A673 (cell line): ENCODE measurements at regions of chr4 and their contacts with region 1.

Region 1: DNA sequence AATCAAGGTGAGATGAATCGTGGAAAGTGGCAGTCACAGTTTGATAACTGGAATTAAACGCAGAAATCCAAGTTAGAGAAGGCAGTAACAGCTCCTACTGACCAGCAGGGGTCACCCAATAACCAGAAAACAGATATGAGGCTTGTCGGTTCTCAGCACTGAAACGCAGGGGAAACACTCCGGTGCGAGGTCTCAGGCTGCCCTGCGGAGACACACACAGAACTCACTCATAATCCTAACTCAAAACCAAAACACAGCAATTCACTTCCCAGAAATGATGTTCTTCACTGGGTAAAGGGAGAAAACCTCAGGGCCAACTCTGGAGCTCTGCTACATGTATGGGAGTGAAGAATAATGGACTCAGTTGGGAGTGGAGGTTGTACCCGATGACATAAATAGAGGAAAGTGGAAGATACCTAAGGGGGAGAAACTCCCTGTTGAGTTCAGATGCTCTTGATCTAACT is 384.4 kb downstream of the RAPGEF2 start:
- DNase-seq: peak; percentile 95
- H3K4me3 ChIP-seq: no peak overlapping the region
- H3K27ac ChIP-seq: no peak overlapping the region
- H3K4me1 ChIP-seq: peaks cover 10% of the 10 kb centered on the region
- H3K27me3 ChIP-seq: no peaks in the 10 kb centered on the region
- CTCF ChIP-seq: peak; percentile 98

Region 2: GRCh38 chr4:159608437-159608836 is 121.1 kb after region 1 on chr4:
- CTCF ChIA-PET with region 1: no interaction called
- POLR2A ChIA-PET with region 1: no interaction called
- intact Hi-C with region 1: loop called (anchors 5 kb)
- DNase-seq: peak; percentile 87
- H3K4me3 ChIP-seq: no peak overlapping the region
- H3K27ac ChIP-seq: peak overlapping the region; percentile 1
- H3K4me1 ChIP-seq: peaks cover 14% of the 10 kb centered on the region
- H3K27me3 ChIP-seq: no peaks in the 10 kb centered on the region
- CTCF ChIP-seq: peak; percentile 56

Region 3: DNA sequence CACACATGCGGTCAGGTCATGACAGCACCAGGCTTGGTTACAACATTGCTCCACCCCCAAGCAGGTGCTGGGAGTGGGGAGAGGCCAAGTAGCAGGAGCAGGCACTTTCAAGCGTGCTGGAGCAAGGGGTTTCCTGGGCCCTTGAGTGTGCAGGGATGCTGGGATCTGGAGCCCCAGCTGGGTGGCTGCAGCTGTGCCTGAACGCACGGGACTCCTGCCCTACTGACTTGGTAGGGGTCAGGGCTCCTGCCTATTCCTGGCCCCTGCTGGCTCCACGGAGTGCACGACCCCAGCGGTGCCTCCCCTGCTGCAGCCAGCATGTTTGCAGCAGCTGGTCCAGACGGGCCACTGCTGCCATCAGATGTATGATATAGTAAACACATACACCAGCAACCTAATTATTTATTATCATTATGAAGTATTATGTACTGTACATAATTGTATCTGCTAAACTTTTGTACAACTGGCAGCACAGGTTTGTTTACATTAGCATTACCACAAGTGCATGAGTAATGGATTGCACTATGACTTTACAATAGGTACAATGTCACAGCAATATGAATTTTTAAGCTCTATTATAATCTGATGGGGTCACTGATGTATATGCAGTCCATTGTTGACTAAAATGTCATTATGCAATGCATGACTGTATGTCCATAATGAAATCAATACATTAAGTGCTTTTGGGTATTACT is 236.2 kb after region 1 on chr4:
- CTCF ChIA-PET with region 1: no interaction called
- POLR2A ChIA-PET with region 1: no interaction called
- intact Hi-C with region 1: no loop called
- DNase-seq: no peak
- H3K4me3 ChIP-seq: no peak overlapping the region
- H3K27ac ChIP-seq: no peak overlapping the region
- H3K4me1 ChIP-seq: peaks cover 9% of the 10 kb centered on the region
- H3K27me3 ChIP-seq: no peaks in the 10 kb centered on the region
- CTCF ChIP-seq: no peak

Region 4: DNA sequence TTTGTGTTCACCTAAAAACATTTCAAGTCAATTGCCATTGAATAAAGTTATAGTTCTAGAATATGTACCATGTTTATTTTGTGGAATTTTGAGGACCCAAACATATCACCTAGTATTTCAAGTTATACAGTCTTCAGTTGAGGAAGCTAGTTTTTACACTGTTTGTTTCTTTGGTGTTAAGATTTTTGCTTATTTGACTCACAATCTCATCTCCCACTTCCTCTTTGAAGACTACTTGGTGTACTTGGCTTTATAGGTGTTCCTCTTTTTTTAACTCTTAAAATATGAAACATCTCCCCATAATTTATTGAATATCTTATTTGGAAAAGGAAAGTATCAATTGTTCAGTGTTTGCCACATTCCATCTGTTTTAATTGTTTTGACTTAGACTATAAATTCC is 291.0 kb after region 1 on chr4:
- CTCF ChIA-PET with region 1: no interaction called
- POLR2A ChIA-PET with region 1: no interaction called
- intact Hi-C with region 1: loop called (anchors 1 kb)
- DNase-seq: no peak
- H3K4me3 ChIP-seq: peak overlapping the region; percentile 55
- H3K27ac ChIP-seq: peak overlapping the region; percentile 94
- H3K4me1 ChIP-seq: peaks cover 48% of the 10 kb centered on the region
- H3K27me3 ChIP-seq: no peaks in the 10 kb centered on the region
- CTCF ChIP-seq: no peak

Region 5: DNA sequence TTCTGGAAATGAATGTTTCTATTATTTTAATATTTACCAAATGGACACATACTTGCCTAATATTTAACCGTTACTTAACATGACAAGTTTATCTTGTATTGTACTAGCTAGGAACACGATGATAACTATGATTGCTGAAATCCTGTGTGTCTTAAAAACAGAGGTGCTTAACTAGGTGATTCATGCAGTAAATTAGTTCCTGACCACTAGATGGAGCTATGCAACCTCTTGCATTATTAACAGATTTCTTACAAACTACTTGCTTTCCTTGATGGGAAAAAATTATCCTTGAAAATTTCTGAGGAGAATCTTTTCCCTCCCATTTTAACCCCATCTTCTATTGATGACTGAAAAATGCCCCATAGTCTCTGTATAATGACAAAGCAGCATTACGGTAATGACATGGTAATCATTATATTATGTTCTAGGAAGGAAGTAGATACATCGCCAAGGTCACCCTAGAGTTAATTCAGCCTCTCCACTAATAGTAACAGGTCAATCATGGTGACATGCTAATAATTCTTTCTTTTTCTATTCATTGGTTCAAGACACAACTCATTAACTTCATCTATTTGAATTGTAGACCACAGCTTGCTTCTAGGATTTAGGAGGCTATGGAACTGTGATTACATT is 459.8 kb after region 1 on chr4:
- CTCF ChIA-PET with region 1: no interaction called
- POLR2A ChIA-PET with region 1: no interaction called
- intact Hi-C with region 1: loop called (anchors 5 kb)
- DNase-seq: peak; percentile 82
- H3K4me3 ChIP-seq: no peak overlapping the region
- H3K27ac ChIP-seq: no peak overlapping the region
- H3K4me1 ChIP-seq: peaks cover 20% of the 10 kb centered on the region
- H3K27me3 ChIP-seq: no peaks in the 10 kb centered on the region
- CTCF ChIP-seq: peak; percentile 84

Region 6: DNA sequence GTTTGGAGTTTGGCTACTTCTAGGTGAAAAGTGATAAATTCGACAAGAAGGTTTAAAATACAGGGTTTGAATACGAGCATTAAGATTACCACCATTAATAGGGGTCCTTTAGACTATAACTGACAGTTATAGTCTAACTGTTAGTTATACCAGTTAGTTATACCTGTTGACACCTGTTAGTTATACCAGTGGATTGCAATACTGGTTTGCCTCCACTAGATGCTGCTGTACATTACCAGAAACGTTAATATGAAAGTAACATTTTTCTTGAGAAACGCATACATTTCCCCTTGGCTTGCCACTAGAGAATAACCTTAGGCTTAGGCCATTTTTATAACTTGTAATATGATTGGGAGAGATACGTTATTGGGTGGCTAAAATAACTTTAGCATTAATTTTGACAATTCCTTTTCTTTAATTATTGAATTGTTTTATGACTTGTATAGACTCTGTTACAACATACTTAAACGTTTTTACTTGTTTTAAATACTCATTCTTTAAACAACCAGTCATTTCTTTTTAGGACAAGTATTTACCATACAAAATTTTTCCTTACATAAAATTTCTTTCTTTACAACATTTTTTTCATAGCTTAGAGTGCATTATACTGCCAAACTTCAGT is 1765.3 kb after region 1 on chr4:
- CTCF ChIA-PET with region 1: no interaction called
- POLR2A ChIA-PET with region 1: no interaction called
- intact Hi-C with region 1: loop called (anchors 10 kb)
- DNase-seq: peak; percentile 45
- H3K4me3 ChIP-seq: no peak overlapping the region
- H3K27ac ChIP-seq: no peak overlapping the region
- H3K4me1 ChIP-seq: no peaks in the 10 kb centered on the region
- H3K27me3 ChIP-seq: no peaks in the 10 kb centered on the region
- CTCF ChIP-seq: peak; percentile 80